Heart right ventricle (tissue), 16 donors: ENCODE measurements at regions of chr10 and their contacts with region 1.

Region 1: DNA sequence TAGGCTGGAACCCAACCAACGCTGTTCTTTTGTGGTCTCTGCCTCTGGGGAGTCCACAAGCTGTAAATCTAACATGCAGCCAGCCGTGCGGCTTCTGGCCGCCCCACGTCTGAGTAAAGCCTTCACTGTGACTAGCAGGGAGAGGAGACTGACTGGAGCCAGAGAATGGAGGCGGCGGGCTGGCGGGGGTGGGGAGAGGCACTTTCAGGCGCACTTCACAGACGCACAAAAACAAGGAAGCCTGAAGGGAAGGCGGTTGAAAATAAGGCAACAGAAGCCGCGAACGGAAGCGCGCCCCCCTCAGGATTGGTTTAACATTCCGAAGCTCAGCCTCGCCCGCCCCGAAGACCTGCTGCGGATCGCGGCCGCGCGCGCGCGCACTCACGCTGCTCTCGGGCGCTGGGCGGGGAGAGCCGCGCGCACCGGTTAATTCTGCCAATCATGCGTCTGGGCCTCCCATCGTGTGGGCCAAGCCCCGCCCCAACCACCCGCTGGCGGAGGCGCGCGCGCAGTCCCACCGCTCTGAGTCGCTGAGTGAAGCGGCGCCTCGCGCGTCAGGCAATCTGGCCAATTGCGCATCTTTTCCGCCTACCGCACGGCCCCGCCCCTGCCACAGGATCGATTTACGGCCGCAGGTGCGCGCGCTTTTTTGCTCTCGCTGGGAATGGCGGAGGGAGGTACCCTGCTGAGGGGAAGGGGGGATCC is at the start of gene SFR1:
- DNase-seq: peak; percentile 98 to 99
- ATAC-seq: peak; percentile 95 to 99 (median 97)
- H3K4me3 ChIP-seq: peak within 1 kb of the TSS; percentile 61 to 88 (median 78)
- H3K27ac ChIP-seq: peak within 1 kb of the TSS; percentile 89 to 100 (median 98)
- H3K4me1 ChIP-seq: peaks cover 0 to 24% (median 12%) of the 10 kb centered on the region in 9 donors
- H3K27me3 ChIP-seq: no peaks in the 10 kb centered on the region
- CTCF ChIP-seq: peak; percentile 25 to 81 (median 66)
- total RNA-seq, gene SFR1: 4.4 to 10.4 (median 6.7) TPM

Region 2: GRCh38 chr10:103905441-103905840 is 216.2 kb before region 1 on chr10:
- intact Hi-C with region 1: loop called in 1 of 10 experiments (anchors 5 kb)
- DNase-seq: no peak
- ATAC-seq: no peak
- H3K4me3 ChIP-seq: no peak overlapping the region
- H3K27ac ChIP-seq: peak overlapping the region in 3 of 10 donors; percentile 24 to 90 (median 29)
- H3K4me1 ChIP-seq: peaks cover 12 to 44% (median 19%) of the 10 kb centered on the region in 9 donors
- H3K27me3 ChIP-seq: no peaks in the 10 kb centered on the region
- CTCF ChIP-seq: no peak

Region 3: DNA sequence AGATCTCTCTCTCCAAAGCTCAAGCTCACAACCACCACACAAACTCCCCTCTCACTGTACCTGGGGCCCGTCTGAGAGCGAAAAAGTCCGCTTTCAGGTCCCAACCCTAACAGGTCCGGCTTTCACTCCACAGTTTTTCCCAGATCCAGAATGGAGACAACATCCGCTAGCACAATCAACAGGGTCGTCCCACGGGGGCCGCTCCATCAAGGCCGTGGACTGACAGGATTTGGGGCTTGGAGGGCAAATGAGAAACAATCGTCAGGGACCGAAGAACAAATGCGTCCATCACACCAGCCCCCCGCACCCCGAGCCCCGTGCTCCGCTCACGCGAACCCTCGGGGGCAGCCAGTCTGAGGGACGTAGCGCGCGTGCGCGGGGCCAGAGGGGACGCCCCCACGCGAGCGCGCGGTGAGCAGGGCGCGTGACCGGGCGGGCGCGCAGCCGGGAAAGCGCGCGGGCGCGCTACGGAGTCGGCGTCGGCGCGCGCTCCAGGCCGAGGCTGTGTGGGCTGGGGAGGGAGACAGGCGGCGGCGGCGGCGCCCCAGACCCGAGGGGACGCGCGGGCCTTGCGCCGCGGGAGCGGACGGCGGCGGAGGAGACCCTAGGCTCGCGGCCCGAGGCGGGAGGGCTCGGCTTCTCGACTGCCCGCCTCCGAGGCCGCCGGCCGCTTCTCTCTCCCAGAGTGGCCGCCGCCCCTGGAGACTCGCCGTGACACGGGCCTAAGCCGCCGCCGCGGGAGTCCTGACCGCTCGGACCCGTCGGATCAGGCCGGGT is 154.8 kb before region 1 on chr10 and contains the start of gene SLK:
- intact Hi-C with region 1: loop called in 6 of 10 experiments (anchors 2 to 5 kb)
- DNase-seq: peak; percentile 83 to 89
- ATAC-seq: peak; percentile 95 to 99 (median 96)
- H3K4me3 ChIP-seq: peak within 1 kb of the TSS; percentile 69 to 95 (median 86)
- H3K27ac ChIP-seq: peak within 1 kb of the TSS; percentile 89 to 99 (median 97)
- H3K4me1 ChIP-seq: peaks cover 0 to 47% (median 31%) of the 10 kb centered on the region in 9 donors
- H3K27me3 ChIP-seq: no peaks in the 10 kb centered on the region
- CTCF ChIP-seq: no peak
- total RNA-seq, gene SLK: 30.4 to 63.6 (median 44.2) TPM

Region 4: GRCh38 chr10:104045151-104046089 is 76.3 kb before region 1 on chr10:
- intact Hi-C with region 1: loop called in 2 of 10 experiments (anchors 10 kb)
- DNase-seq: peak in 1 of 2 donors; percentile 38
- ATAC-seq: peak; percentile 66 to 90 (median 76)
- H3K4me3 ChIP-seq: no peak overlapping the region
- H3K27ac ChIP-seq: no peak overlapping the region
- H3K4me1 ChIP-seq: peaks cover 0 to 12% (median 0%) of the 10 kb centered on the region in 9 donors
- H3K27me3 ChIP-seq: no peaks in the 10 kb centered on the region
- CTCF ChIP-seq: peak; percentile 22 to 70 (median 61)

Region 5: GRCh38 chr10:104209575-104210198 is 88.0 kb after region 1 on chr10:
- intact Hi-C with region 1: loop called in 1 of 10 experiments (anchors 5 kb)
- DNase-seq: peak in 1 of 2 donors; percentile 35
- ATAC-seq: peak in 5 of 8 donors; percentile 47 to 77 (median 61)
- H3K4me3 ChIP-seq: no peak overlapping the region
- H3K27ac ChIP-seq: no peak overlapping the region
- H3K4me1 ChIP-seq: peaks cover 0 to 7% (median 0%) of the 10 kb centered on the region in 9 donors
- H3K27me3 ChIP-seq: peaks cover 0 to 3% (median 0%) of the 10 kb centered on the region in 7 donors
- CTCF ChIP-seq: peak in 8 of 9 donors; percentile 14 to 71 (median 66)